ENCODE measurements at regions of chr11 and their contacts with region 1.

Region 1: DNA sequence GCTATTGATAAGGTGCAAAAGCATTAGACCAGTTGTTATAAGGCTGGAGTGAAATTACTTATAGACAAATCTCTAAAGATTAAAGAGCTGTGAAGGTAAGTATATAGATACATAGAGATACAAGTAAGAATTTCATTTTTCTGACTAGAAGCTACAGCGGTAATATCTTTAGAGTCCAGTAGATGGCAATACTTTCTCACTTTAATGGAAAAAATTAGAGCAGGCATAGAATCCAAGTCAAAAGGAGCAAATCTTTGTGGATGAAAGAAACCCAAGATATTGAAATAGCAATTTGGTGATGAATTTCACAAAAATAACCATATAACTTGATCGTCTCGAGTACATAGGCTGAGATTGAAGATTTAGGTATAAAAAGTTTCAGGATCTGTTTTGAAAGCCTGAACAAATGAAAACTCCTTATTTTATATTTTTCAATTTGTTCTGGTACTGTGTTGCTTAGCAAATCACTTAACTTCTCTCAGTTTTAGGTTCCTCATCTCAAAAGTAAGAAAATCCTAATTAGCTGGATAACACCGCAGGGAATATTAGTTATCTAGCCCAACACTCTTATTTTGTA is 81.9 kb downstream of the UVRAG start:
- DNase-seq: no peak
- ATAC-seq: peak; percentile 29

Region 2: GRCh38 chr11:76152086-76152681 is 255.3 kb after region 1 on chr11:
- intact Hi-C with region 1: loop called (anchors 5 kb)
- DNase-seq: peak; percentile 94
- ATAC-seq: peak; percentile 94

Region 3: GRCh38 chr11:76318744-76319384 is 421.9 kb after region 1 on chr11:
- intact Hi-C with region 1: loop called (anchors 10 kb)
- DNase-seq: peak; percentile 88
- ATAC-seq: peak; percentile 94